ENCODE measurements at regions of chr2 and their contacts with region 1.

Region 1: GRCh38 chr2:73926493-73927338 is at the start of gene DGUOK:
- DNase-seq: peak; percentile 99
- total RNA-seq, gene DGUOK: 23.7 TPM

Region 2: DNA sequence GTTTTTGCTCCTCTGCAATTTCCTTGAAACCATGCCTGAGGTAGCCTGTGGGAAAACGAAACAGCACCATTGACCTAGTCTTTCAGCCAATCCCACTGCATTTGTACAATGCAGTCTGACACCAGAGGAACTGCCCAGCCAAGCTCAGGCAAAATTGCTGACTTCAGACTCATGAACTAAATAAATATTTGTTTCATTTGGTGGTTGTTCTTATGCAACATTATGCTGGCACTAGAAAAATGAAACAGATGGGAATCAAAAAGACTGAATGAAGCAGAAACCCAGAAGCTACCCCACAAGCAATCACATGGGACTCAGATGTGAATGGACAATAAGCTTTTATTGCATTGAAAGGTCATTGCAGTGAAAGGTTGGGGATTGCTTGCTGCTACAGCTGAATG is 286.2 kb before region 1 on chr2:
- intact Hi-C with region 1: no loop called
- DNase-seq: no peak

Region 3: GRCh38 chr2:73859721-73860586 is 66.8 kb before region 1 on chr2:
- intact Hi-C with region 1: no loop called
- DNase-seq: no peak

Region 4: DNA sequence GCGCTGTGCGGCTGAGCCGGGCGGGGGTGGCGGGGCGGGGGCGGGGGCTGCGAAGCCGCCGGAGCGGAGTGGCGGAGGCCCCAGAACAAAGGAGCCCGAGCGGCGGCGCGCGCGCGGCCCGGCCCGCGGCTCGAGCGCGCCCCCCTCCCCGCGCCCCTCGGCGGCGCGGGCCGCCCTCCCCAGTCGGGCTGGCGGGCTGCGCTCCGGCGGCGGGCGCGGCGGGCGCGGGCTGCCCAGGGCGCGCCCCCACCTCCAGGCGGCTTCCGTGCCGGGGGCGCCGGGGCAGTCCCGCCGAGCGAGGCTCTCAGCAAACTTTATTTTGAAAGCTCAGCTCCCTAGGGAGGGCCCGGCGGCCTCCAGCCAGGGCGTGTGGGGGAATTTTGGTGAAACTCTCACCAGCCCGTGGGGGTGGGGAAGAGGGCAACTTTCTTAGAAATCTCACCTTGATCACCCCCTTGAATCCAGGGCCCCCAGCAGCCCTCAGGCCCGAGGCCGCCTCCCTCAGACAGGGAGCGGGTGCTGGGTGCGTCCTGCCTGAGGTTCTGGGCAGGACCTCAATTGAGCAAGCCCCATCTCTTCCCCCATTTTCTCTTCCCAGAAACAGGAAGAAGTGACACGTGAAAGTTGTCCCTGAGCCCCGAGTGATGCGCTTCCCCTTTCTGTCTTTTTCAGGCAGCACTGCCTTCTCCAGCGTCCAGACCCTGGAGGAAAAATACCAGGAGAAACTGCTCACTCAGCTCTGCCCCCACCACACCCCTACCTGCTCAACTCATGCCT is 58.8 kb after region 1 on chr2:
- intact Hi-C with region 1: loop called (anchors 2 kb)
- DNase-seq: peak; percentile 80

Region 5: DNA sequence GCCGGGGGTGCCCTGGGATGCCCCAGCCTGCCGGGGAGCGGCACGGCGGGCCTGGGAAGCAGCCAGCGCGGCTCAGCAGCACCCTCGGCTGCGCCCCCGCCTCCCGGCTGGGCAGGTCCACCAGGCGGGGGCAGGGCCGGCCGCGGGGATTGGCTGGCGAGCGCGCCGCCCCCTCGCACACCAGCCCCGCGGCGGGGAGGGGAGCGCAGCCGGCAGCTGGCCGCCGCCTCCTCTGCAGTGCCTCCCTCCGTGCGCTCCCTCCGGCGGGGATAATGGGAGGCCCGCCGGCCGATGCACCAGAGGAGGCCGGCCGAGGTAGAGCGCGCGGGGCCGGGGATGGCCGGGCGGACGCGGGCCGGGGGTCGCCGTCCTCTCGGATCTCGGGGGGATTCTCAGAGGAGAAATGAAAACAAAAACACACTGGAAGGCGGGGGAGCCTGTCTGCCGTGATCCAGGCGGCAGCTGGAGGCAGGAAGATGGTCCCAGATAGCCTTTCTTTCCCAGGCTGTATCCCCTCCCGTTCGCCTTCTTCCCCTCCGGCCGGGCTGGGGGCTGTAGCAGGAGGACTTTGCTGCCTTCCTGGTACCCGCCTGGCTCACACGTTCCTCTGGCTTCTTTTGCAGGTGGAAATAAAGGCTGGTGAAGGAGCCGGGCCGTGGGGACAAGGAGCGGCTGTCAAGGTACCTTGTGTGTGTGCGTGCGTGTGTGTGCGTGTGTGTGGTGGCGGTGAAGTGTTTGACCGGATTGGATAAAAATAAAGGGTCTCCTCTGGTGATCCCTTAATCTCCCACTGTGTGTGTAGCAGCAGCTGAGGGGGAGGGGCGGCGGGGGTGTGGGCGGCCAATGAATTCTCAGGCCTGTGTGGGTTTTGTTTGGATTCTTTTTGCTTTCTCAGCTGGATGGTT is 76.0 kb after region 1 on chr2:
- intact Hi-C with region 1: loop called (anchors 5 kb)
- DNase-seq: peak; percentile 90

Measured in cardiac septum (tissue), 1 donor.